ENCODE measurements at regions of chr13 and their contacts with region 1.

Region 1: DNA sequence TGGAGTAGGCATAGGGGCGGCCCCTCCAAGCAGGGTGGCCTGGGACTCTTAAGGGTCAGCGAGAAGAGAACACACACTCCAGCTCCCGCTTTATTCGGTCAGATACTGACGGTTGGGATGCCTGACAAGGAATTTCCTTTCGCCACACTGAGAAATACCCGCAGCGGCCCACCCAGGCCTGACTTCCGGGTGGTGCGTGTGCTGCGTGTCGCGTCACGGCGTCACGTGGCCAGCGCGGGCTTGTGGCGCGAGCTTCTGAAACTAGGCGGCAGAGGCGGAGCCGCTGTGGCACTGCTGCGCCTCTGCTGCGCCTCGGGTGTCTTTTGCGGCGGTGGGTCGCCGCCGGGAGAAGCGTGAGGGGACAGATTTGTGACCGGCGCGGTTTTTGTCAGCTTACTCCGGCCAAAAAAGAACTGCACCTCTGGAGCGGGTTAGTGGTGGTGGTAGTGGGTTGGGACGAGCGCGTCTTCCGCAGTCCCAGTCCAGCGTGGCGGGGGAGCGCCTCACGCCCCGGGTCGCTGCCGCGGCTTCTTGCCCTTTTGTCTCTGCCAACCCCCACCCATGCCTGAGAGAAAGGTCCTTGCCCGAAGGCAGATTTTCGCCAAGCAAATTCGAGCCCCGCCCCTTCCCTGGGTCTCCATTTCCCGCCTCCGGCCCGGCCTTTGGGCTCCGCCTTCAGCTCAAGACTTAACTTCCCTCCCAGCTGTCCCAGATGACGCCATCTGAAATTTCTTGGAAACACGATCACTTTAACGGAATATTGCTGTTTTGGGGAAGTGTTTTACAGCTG is at the starts of genes BRCA2 and ZAR1L:
- DNase-seq: peak; percentile 94
- H3K4me3 ChIP-seq: peak within 1 kb of the TSS; percentile 53 to 90 (median 76)
- H3K27ac ChIP-seq: peak within 1 kb of the TSS; percentile 90 to 93 (median 92)
- H3K4me1 ChIP-seq: peaks cover 0 to 11% (median 6%) of the 10 kb centered on the region in 4 donors
- H3K27me3 ChIP-seq: no peaks in the 10 kb centered on the region
- CTCF ChIP-seq: no peak
- EP300 ChIP-seq: peak in 1 of 4 donors; percentile 18
- POLR2A ChIP-seq: peak; percentile 46 to 61
- total RNA-seq, gene BRCA2: 0.49 to 1.1 (median 0.63) TPM
- total RNA-seq, gene ZAR1L: not detected

Region 2: DNA sequence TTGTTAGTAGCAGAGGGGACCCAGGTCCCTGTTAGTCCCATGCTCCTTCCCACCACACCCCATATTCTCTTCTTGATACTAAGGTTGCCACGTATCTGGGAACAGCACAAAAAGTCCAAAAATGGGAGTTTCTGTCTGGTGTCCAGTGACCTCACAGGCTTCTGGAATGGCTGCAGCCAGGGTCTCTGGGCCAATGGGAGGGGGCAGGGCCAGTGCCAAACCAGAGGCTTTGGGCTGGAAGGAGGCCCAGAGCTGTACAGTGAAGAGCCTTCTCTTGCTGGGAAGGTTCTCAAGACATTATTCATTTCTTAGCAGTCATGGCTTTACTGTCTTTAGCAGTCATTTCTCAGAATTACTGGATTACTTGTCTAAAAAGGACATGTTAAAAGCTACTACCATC is 164.6 kb before region 1 on chr13:
- intact Hi-C with region 1: loop called (anchors 5 kb)
- DNase-seq: peak; percentile 89
- H3K4me3 ChIP-seq: no peak overlapping the region
- H3K27ac ChIP-seq: peak overlapping the region; percentile 69 to 82 (median 76)
- H3K4me1 ChIP-seq: peaks cover 0 to 49% (median 40%) of the 10 kb centered on the region in 4 donors
- H3K27me3 ChIP-seq: no peaks in the 10 kb centered on the region
- CTCF ChIP-seq: no peak
- EP300 ChIP-seq: peak in 1 of 4 donors; percentile 42
- POLR2A ChIP-seq: no peak

Region 3: DNA sequence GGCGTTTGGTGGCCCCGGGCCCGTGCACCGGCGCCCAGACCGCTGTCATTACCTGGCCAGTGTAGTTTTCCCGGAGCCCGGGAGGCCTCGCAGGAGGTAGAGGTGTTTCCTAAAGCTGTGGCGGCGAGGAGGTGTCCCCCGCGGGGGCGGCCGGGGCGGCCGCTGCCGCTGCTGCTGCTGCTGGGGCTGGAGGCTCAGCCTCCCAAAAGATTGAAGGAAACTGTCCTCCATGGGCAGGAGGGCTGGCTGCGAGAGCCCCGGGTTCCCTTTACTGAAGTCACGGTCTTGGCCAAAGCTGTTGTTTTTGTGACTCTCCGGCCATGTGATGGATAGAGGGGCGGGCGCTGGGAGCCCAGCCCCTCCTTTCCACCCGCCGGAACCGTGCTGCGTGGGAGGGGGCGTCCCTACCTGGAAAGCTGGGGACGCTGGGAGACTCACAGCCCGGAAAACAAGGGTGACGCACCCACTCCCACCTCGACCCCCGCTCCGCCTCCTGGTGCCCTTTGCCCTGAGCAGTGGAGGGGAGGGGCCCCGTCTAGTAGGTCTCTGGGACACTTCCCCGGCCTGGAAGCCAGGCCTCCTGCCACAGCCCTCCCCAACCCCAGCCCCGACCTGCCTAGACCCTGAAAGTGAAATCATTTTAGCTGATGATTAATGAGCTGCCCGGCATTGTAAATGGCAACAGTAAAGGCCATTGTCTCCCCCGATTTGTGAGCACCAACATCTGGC is 112.6 kb after region 1 on chr13 and contains the start of gene N4BP2L1:
- intact Hi-C with region 1: loop called (anchors 5 kb)
- DNase-seq: peak; percentile 87
- H3K4me3 ChIP-seq: peak within 1 kb of the TSS; percentile 80 to 94 (median 90)
- H3K27ac ChIP-seq: peak within 1 kb of the TSS; percentile 84 to 89 (median 88)
- H3K4me1 ChIP-seq: peaks cover 0 to 41% (median 29%) of the 10 kb centered on the region in 4 donors
- H3K27me3 ChIP-seq: no peaks in the 10 kb centered on the region
- CTCF ChIP-seq: no peak
- EP300 ChIP-seq: no peak
- POLR2A ChIP-seq: peak; percentile 66 to 68
- total RNA-seq, gene N4BP2L1: 17.7 to 34.9 (median 20.9) TPM

Region 4: DNA sequence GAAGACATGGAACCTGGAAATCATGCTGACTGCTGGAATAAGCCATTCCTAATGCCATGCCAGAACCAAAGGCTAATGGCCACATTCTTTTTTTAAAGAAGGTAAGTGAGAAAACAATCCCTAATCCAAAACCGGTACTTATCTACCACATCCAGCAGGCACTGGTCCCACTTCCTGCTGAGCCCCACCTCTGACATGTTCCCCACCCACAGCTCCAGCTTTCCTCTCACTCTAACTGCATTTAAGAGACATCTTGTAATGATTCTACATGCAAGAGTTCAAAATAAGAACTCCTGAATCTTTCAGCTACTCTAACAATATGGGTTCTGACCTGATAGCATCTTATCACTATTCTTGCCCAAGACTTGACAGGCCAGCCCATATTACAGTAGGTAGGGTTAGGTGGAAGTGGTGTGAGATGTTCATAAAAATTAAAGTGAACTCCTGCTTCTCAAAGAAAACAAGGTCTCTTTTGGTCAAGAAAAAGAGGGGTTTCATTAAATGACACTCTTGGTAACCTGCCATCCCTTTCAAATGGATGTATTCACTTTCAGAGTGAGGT is 181.2 kb after region 1 on chr13:
- intact Hi-C with region 1: no loop called
- DNase-seq: no peak
- H3K4me3 ChIP-seq: no peak overlapping the region
- H3K27ac ChIP-seq: no peak overlapping the region
- H3K4me1 ChIP-seq: no peaks in the 10 kb centered on the region
- H3K27me3 ChIP-seq: no peaks in the 10 kb centered on the region
- CTCF ChIP-seq: no peak
- EP300 ChIP-seq: no peak
- POLR2A ChIP-seq: no peak

Region 5: GRCh38 chr13:33034882-33035520 is 719.6 kb after region 1 on chr13:
- intact Hi-C with region 1: no loop called
- DNase-seq: no peak
- H3K4me3 ChIP-seq: no peak overlapping the region
- H3K27ac ChIP-seq: no peak overlapping the region
- H3K4me1 ChIP-seq: peaks cover 0 to 28% (median 11%) of the 10 kb centered on the region in 4 donors
- H3K27me3 ChIP-seq: no peaks in the 10 kb centered on the region
- CTCF ChIP-seq: no peak
- EP300 ChIP-seq: no peak
- POLR2A ChIP-seq: no peak